ENCODE measurements at regions of chrX and their contacts with region 1.

Region 1: DNA sequence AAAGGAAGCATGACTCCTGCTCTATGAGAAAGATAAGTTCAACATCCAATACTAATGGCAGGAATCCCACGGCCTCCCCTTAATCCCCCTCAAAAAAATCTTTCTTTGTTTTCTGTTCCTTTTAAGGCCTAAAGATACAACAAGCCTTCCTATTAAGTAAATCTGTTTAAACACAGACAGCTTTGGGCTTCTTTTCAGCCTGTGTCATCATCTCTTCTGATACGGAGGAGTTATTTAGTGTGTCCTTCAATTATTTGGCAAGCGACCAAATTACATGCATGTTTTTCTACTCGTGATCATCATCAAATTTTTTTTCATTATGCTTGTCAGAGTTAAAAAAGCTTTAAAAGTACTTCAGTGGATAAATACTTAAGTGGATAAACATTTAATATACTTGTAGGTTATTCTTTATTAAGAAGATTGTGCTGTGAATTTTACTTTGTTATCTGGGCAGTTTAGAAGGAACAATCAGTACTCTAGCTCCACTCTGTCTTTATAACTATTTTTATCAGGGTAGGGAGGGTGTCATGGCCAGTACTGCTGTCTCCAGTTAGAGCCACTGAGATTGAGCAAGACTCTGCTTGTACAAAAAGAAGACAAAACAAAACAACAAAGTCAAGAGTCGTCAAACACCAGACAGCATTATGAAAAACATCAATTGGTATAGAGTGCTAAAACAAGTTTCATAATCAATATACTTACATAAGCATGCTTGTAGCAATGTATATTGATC is 210.7 kb downstream of the PRR32 start:
- DNase-seq: no peak
- ATAC-seq: peak; percentile 98

Region 2: DNA sequence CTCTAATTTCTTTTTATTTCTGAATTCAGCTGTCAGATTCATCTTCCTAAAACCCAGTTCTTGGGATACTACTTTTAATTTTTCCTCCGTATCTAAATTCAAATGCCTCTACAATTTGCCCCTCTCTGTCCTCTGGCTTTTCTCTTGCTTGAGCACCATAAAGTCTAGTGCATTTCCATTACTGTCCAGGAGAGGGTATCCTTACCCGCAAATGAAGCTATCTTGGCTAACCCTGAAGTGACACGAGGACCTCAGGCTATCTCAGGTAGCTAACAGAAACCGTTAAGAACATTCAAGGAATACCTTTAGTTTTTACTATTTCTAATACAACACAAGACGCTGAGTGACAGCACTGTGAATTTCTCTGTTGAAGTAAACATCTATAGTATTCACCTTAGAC is 260.0 kb before region 1 on chrX:
- intact Hi-C with region 1: loop called (anchors 5 kb)
- DNase-seq: no peak
- ATAC-seq: peak; percentile 66

Region 3: DNA sequence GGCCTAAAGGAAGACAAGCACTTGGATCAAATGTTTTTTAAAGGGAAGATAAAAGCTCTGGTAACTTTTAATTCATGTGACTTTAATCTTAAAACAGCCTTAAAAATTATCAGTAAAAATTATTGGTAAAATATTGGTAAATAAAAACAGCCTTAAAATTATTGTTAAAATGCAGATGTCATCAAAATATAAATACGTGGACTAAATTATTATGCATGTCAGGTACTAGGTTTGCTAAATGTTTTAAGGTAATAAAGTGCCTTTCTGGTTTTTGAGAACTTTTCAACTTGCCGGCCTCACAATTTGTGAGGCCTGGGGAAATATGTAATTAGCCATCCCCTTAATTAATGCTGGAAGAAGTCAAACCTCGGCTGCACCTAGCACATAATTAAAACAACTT is 63.0 kb before region 1 on chrX:
- intact Hi-C with region 1: no loop called
- DNase-seq: no peak
- ATAC-seq: no peak

Region 4: GRCh38 chrX:126994032-126994600 is 36.1 kb before region 1 on chrX:
- intact Hi-C with region 1: no loop called
- DNase-seq: peak; percentile 42
- ATAC-seq: peak; percentile 57

Region 5: GRCh38 chrX:127138218-127138617 is 108.0 kb after region 1 on chrX:
- intact Hi-C with region 1: no loop called
- DNase-seq: no peak
- ATAC-seq: no peak